Mammary epithelial cell (primary cell): ENCODE measurements at regions of chr12 and their contacts with region 1.

Region 1: DNA sequence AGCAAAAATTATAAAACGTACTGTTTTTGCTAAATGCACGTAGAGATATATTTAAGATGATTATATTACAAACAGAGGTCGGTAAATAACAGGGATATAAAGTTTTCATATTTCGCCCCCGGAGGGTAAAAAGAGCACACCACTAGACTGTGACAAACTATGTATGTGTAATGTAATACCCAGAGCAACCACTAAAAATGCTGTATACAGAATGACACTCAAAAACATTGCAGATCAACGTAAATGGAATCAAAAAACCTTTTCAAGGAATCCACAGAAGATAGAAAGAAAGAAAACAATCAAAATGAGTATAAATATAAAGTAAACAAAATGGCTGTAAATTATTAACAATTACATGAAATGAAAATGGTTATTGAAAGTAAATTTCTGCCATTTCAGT is 37.6 kb upstream of the PRB4 start:
- DNase-seq: no peak
- H3K4me3 ChIP-seq: no peak overlapping the region
- H3K27ac ChIP-seq: no peak overlapping the region
- H3K4me1 ChIP-seq: peaks cover 3% of the 10 kb centered on the region
- H3K27me3 ChIP-seq: no peaks in the 10 kb centered on the region
- CTCF ChIP-seq: peak; percentile 28 to 29

Region 2: GRCh38 chr12:11408096-11408495 is 60.3 kb after region 1 on chr12:
- CTCF ChIA-PET with region 1: no interaction called
- dilution Hi-C with region 1: no loop called
- in situ Hi-C with region 1: no loop called
- intact Hi-C with region 1: loop called (anchors 10 kb)
- DNase-seq: peak; percentile 38
- H3K4me3 ChIP-seq: no peak overlapping the region
- H3K27ac ChIP-seq: no peak overlapping the region
- H3K4me1 ChIP-seq: peaks cover 6% of the 10 kb centered on the region
- H3K27me3 ChIP-seq: no peaks in the 10 kb centered on the region
- CTCF ChIP-seq: no peak